IMR-90 (cell line): ENCODE measurements at regions of chr12 and their contacts with region 1.

Region 1: DNA sequence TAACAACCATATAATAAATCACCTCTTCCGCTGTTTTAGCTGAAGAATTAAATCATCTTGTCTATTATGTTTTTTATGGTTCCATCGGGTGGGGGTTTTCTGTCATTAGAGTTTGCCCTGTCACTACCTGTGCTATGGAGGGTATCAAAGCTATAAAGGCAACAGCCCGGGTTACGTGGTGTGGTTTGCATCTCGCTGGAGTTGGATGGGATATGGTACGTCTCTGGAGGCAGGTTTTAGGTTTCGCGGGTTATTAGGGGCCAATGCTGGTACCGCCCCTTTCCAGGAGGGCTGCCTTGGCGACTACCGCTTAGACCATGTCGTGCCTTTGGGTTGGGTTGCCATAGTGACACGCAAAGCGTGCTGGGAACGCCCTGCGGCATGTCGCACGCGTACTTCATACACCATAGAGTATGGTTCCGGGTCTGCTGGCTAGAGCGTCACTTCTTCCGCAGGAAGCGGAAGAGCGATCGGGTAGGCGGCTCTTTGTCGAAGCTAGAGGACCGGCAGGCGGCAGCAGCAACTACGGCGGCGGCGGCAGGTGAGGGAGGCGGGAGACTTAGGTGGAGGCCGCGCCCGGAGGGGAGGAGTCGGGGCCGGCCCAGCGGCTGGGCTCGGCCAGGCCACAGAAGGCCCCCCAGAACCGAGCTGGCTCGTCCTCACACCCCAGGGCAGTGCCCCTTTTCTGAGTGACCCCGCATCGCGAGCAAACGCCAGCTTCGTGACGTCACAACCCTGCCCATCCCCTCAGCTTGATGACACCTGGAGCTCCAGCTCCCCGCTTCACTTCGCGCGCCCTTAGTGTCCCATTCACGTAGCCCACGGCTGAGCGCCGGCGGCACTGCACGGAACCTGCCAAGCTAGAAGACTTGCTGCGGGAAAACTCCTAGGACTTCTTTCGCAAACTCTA is at the start of gene ZC3H10:
- DNase-seq: peak; percentile 100
- ATAC-seq: peak; percentile 76
- H3K4me3 ChIP-seq: peak within 1 kb of the TSS; percentile 85
- H3K27ac ChIP-seq: peak within 1 kb of the TSS; percentile 95
- H3K4me1 ChIP-seq: peaks cover 7% of the 10 kb centered on the region
- H3K27me3 ChIP-seq: no peaks in the 10 kb centered on the region
- CTCF ChIP-seq: peak; percentile 58
- POLR2A ChIP-seq: peak; percentile 97
- RAD21 ChIP-seq: no peak
- total RNA-seq, gene ZC3H10: 3.3 and 3.6 TPM in 2 replicates

Region 2: GRCh38 chr12:56041552-56042429 is 76.2 kb before region 1 on chr12 and contains the start of gene RPS26:
- CTCF ChIA-PET with region 1: interaction called, 3 read pairs
- POLR2A ChIA-PET with region 1: no interaction called
- dilution Hi-C with region 1: no loop called
- in situ Hi-C with region 1: no loop called
- intact Hi-C with region 1: loop called (anchors 2 kb)
- DNase-seq: peak; percentile 100
- ATAC-seq: peak; percentile 88
- H3K4me3 ChIP-seq: peak within 1 kb of the TSS; percentile 93
- H3K27ac ChIP-seq: peak within 1 kb of the TSS; percentile 90
- H3K4me1 ChIP-seq: no peaks in the 10 kb centered on the region; the same call in 1 of the 2 replicates
- H3K27me3 ChIP-seq: no peaks in the 10 kb centered on the region
- CTCF ChIP-seq: peak; percentile 53
- POLR2A ChIP-seq: peak; percentile 99
- RAD21 ChIP-seq: peak; percentile 65
- total RNA-seq, gene RPS26: 307 and 977 TPM in 2 replicates

Region 3: GRCh38 chr12:56158029-56158925 is 40.2 kb after region 1 on chr12 and contains the start of gene MYL6:
- CTCF ChIA-PET with region 1: interaction called, 3 read pairs
- POLR2A ChIA-PET with region 1: interaction called, 6 read pairs
- dilution Hi-C with region 1: no loop called
- in situ Hi-C with region 1: no loop called
- intact Hi-C with region 1: loop called (anchors 2 kb)
- DNase-seq: peak; percentile 99
- ATAC-seq: peak; percentile 70
- H3K4me3 ChIP-seq: peak within 1 kb of the TSS; percentile 73
- H3K27ac ChIP-seq: peak within 1 kb of the TSS; percentile 90
- H3K4me1 ChIP-seq: peaks cover 18% of the 10 kb centered on the region
- H3K27me3 ChIP-seq: no peaks in the 10 kb centered on the region
- CTCF ChIP-seq: no peak
- POLR2A ChIP-seq: peak; percentile 99
- RAD21 ChIP-seq: no peak
- total RNA-seq, gene MYL6: 4,816 and 6,155 TPM in 2 replicates

Region 4: GRCh38 chr12:56197921-56198635 is 80.0 kb after region 1 on chr12:
- CTCF ChIA-PET with region 1: no interaction called
- POLR2A ChIA-PET with region 1: no interaction called
- dilution Hi-C with region 1: no loop called
- in situ Hi-C with region 1: no loop called
- intact Hi-C with region 1: loop called (anchors 2 kb)
- DNase-seq: no peak
- ATAC-seq: no peak
- H3K4me3 ChIP-seq: no peak overlapping the region
- H3K27ac ChIP-seq: no peak overlapping the region
- H3K4me1 ChIP-seq: peaks cover 4% of the 10 kb centered on the region
- H3K27me3 ChIP-seq: no peaks in the 10 kb centered on the region
- CTCF ChIP-seq: no peak
- POLR2A ChIP-seq: no peak
- RAD21 ChIP-seq: no peak

Region 5: DNA sequence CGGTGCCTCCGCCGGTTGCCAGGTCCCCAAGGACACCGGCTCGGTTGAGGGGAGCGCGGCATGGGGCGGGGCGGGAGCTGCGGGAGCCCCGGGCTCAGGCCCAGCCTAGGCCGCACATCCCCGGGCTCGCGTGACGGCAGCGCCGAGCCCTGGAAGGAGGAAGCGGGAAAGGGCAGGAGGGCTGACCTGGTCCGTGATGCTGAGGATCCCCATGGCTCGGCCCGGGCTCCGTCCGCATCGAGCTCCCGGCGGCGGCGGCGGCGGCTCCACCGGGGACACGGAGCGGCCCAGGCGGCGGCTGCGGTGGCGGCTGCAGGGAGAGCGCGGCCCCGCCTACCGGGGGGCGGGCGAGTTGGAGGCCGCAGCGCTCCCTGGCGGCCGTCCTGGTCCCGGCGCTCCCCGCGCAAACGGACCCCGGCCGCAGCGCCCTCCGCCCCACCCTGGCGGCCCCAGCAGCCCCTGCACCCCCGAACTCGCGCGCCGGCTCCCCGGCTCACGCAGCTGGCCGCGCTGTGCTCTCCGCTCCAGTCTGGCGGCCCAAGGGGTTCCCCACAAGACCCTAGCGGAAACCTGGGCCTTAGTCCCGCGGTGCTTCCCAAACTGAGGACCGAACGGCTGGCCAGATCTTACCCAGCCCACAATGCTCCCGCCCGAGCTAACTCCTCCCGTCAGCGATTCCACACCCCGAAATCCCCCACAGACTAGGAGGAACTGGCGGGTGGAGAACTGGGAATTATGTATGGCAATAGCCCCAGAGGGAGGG is 140.2 kb after region 1 on chr12 and contains the start of gene ANKRD52:
- CTCF ChIA-PET with region 1: no interaction called
- POLR2A ChIA-PET with region 1: no interaction called
- dilution Hi-C with region 1: no loop called
- in situ Hi-C with region 1: no loop called
- intact Hi-C with region 1: loop called (anchors 2 kb)
- DNase-seq: peak; percentile 71
- ATAC-seq: peak; percentile 86
- H3K4me3 ChIP-seq: peak within 1 kb of the TSS; percentile 94
- H3K27ac ChIP-seq: peak within 1 kb of the TSS; percentile 94
- H3K4me1 ChIP-seq: peaks cover 22% of the 10 kb centered on the region
- H3K27me3 ChIP-seq: no peaks in the 10 kb centered on the region
- CTCF ChIP-seq: peak; percentile 82
- POLR2A ChIP-seq: no peak
- RAD21 ChIP-seq: peak; percentile 34
- total RNA-seq, gene ANKRD52: 15.4 and 16.1 TPM in 2 replicates